CD8-positive, alpha-beta T cell (primary cell): ENCODE measurements at regions of chr10 and their contacts with region 1.

Region 1: DNA sequence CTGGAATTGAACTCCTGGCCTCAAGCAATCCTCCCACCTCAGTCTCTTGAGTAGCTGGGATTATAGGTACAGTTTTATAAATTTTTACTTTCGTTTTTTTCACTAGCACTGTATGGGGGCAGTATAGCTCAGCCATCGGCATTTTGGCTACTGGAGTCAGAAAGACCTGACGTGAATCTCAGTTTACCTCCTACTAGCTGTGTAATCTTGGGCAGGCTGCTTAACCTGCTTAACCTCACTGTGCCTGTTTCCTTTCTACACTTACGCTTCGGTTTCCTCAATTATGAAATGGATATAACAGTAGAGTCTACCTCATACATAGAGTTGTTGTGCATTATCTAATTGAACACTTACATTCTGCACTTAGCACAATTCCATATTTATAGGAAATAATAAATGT is 16.7 kb downstream of the STN1 start:
- DNase-seq: peak in 3 of 9 experiments; percentile 23 to 52 (median 45)
- ATAC-seq: peak; percentile 78
- H3K4me3 ChIP-seq: peak overlapping the region in 1 of 2 experiments; percentile 3
- H3K4me3 Mint-ChIP-seq: peak overlapping the region; percentile 76
- H3K27ac ChIP-seq: no peak overlapping the region
- H3K27ac Mint-ChIP-seq: peak overlapping the region; percentile 83
- H3K4me1 ChIP-seq: peaks cover 53% of the 10 kb centered on the region
- H3K4me1 Mint-ChIP-seq: peaks cover 50% of the 10 kb centered on the region
- H3K27me3 ChIP-seq: no peaks in the 10 kb centered on the region
- H3K27me3 Mint-ChIP-seq: no peaks in the 10 kb centered on the region
- CTCF ChIP-seq: no peak

Region 2: DNA sequence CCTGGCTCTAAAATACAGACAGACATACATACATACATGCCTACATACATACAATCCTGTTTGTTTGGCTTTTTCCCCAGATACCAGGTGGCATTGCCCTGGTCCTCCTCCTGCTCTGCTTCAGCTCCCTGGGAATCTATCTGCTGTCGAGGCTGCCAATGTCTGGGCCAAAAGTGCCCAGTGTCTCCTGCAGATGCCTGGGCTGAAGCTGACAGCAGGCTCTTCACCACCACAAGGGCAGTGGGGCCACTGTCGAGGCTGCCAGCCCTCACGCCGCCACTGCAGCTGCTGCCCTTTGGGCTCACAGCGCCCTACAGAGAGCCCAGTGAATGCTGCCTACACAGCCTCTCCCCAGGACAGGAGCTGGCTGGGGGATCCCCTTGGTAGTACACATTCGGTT is 34.7 kb after region 1 on chr10:
- CTCF ChIA-PET with region 1: no interaction called
- POLR2A ChIA-PET with region 1: no interaction called
- intact Hi-C with region 1: loop called (anchors 1 to 5 kb)
- DNase-seq: no peak
- ATAC-seq: no peak
- H3K4me3 ChIP-seq: no peak overlapping the region
- H3K4me3 Mint-ChIP-seq: no peak overlapping the region
- H3K27ac ChIP-seq: no peak overlapping the region
- H3K27ac Mint-ChIP-seq: no peak overlapping the region
- H3K4me1 ChIP-seq: no peaks in the 10 kb centered on the region
- H3K4me1 Mint-ChIP-seq: no peaks in the 10 kb centered on the region
- H3K27me3 ChIP-seq: no peaks in the 10 kb centered on the region
- H3K27me3 Mint-ChIP-seq: no peaks in the 10 kb centered on the region
- CTCF ChIP-seq: no peak